Activated CD8-positive, alpha-beta T cell treated with anti-CD3 and anti-CD28 coated beads for 36 hours (primary cell): ENCODE measurements at regions of chr15 and their contacts with region 1.

Region 1: DNA sequence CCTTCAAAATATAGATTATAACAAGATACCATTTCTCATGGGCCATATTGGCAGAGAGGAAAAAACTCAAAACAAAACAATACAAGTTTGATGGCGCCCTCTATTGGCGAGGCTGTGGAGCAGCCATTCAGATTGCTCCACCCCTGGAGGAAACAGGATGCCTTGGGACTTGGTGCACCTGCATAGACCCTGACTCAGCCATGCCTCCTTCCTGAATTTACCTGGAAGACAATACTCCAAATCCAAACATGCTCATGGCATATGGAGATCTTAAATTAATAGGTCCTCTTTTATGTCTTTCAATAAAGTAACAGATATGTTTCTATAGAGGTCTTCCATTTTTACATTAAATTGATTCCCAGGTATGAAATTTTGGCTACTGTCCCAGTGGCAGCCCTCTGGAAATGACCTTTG is 90.0 kb downstream of the APBA2 start:
- DNase-seq: peak; percentile 73
- ATAC-seq: peak; percentile 82
- H3K4me3 Mint-ChIP-seq: no peak overlapping the region
- H3K27ac Mint-ChIP-seq: no peak overlapping the region
- H3K4me1 Mint-ChIP-seq: peaks cover 33% of the 10 kb centered on the region
- H3K27me3 Mint-ChIP-seq: no peaks in the 10 kb centered on the region
- CTCF ChIP-seq: peak; percentile 90

Region 2: DNA sequence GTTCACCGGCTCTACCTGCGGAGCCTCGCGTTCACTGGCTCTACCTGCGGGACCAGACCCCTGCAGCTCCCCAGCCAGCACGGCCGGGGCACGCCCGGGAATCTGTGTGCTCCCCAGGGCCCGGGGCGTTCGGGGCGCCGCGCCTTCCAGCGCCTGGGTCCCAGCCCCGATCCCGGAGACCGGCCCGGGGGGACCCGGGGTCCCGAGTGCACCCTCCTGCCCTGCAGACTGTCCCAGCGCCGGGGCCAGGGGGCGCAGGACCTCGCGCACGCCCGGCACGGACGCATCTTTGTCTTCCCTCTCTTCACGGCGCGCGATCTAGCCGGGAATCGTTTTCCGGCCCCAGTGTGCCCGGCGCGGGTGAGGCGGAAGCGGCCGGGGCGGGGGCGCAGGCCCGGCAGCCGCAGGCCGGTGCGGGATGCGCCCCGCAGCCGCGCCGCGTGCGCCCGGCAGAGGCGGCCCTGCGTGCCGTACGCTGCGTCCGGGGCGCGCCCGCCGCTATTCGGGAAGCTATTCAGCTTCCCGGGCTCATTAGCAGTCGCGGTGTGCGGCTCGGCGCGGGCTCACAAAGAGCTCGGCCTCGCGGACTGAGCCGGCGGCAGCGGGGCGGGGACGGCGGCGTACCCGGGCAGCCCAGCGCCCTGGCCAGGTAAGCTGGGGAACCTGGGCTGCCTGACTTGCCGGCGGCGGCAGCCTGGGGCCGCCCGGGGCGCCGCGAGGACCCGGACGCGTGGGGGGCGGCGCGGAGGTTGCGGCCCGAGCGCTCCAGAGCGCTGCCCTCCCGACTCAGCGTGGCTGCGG is 89.9 kb before region 1 on chr15 and contains the start of gene APBA2:
- CTCF ChIA-PET with region 1: interaction called, 16 read pairs
- POLR2A ChIA-PET with region 1: no interaction called
- intact Hi-C with region 1: loop called (anchors 5 kb)
- DNase-seq: peak; percentile 56
- ATAC-seq: peak; percentile 50
- H3K4me3 Mint-ChIP-seq: peak within 1 kb of the TSS; percentile 84
- H3K27ac Mint-ChIP-seq: peak within 1 kb of the TSS; percentile 79
- H3K4me1 Mint-ChIP-seq: peaks cover 39% of the 10 kb centered on the region
- H3K27me3 Mint-ChIP-seq: no peaks in the 10 kb centered on the region
- CTCF ChIP-seq: no peak
- total RNA-seq, gene APBA2: 30.8 to 32.0 TPM

Region 3: GRCh38 chr15:28921919-28922706 is 53.7 kb before region 1 on chr15:
- CTCF ChIA-PET with region 1: interaction called, 25 read pairs
- POLR2A ChIA-PET with region 1: no interaction called
- intact Hi-C with region 1: no loop called
- DNase-seq: peak; percentile 10
- ATAC-seq: no peak
- H3K4me3 Mint-ChIP-seq: no peak overlapping the region
- H3K27ac Mint-ChIP-seq: no peak overlapping the region
- H3K4me1 Mint-ChIP-seq: peaks cover 64% of the 10 kb centered on the region
- H3K27me3 Mint-ChIP-seq: no peaks in the 10 kb centered on the region
- CTCF ChIP-seq: peak; percentile 37

Region 4: GRCh38 chr15:28935326-28935725 is 40.4 kb before region 1 on chr15:
- CTCF ChIA-PET with region 1: interaction called, 38 read pairs
- POLR2A ChIA-PET with region 1: interaction called, 3 read pairs
- intact Hi-C with region 1: loop called (anchors 5 kb)
- DNase-seq: peak; percentile 85
- ATAC-seq: peak; percentile 64
- H3K4me3 Mint-ChIP-seq: no peak overlapping the region
- H3K27ac Mint-ChIP-seq: no peak overlapping the region
- H3K4me1 Mint-ChIP-seq: peaks cover 71% of the 10 kb centered on the region
- H3K27me3 Mint-ChIP-seq: no peaks in the 10 kb centered on the region
- CTCF ChIP-seq: peak; percentile 51

Region 5: DNA sequence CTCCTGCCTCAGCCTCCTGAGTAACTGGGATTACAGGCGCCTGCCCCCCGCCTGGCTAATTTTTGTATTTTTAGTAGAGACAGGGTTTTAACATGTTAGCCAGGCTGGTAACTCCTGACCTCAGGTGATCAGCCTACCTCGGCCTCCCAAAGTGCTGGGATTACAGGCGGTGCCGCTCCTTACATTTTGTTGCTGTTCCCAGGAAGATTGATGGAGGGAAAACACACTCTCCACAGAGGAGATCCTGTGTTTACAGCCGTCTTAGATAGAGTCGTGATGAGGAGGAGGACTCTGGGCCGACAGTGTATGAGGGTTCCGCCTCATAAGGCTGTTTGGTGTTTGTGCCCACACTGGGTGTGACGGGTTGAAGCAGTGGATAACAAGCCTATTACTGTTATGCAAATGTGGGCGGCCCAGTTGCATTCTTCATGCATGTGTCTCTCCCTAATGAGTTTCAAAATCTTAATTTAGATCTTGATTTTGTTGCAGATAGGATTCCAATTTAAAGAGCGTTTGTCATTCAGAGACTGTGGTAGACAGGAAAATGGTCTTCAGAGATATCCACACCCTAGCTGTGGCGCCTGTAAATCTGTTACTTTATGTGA is 30.0 kb before region 1 on chr15:
- CTCF ChIA-PET with region 1: interaction called, 16 read pairs
- POLR2A ChIA-PET with region 1: no interaction called
- intact Hi-C with region 1: no loop called
- DNase-seq: no peak
- ATAC-seq: no peak
- H3K4me3 Mint-ChIP-seq: no peak overlapping the region
- H3K27ac Mint-ChIP-seq: no peak overlapping the region
- H3K4me1 Mint-ChIP-seq: peaks cover 77% of the 10 kb centered on the region
- H3K27me3 Mint-ChIP-seq: no peaks in the 10 kb centered on the region
- CTCF ChIP-seq: no peak

Region 6: GRCh38 chr15:28955160-28956008 is 20.4 kb before region 1 on chr15:
- CTCF ChIA-PET with region 1: interaction called, 14 read pairs
- POLR2A ChIA-PET with region 1: interaction called, 3 read pairs
- intact Hi-C with region 1: no loop called
- DNase-seq: peak; percentile 69
- ATAC-seq: peak; percentile 83
- H3K4me3 Mint-ChIP-seq: peak overlapping the region; percentile 9
- H3K27ac Mint-ChIP-seq: peak overlapping the region; percentile 55
- H3K4me1 Mint-ChIP-seq: peaks cover 54% of the 10 kb centered on the region
- H3K27me3 Mint-ChIP-seq: no peaks in the 10 kb centered on the region
- CTCF ChIP-seq: no peak

Region 7: DNA sequence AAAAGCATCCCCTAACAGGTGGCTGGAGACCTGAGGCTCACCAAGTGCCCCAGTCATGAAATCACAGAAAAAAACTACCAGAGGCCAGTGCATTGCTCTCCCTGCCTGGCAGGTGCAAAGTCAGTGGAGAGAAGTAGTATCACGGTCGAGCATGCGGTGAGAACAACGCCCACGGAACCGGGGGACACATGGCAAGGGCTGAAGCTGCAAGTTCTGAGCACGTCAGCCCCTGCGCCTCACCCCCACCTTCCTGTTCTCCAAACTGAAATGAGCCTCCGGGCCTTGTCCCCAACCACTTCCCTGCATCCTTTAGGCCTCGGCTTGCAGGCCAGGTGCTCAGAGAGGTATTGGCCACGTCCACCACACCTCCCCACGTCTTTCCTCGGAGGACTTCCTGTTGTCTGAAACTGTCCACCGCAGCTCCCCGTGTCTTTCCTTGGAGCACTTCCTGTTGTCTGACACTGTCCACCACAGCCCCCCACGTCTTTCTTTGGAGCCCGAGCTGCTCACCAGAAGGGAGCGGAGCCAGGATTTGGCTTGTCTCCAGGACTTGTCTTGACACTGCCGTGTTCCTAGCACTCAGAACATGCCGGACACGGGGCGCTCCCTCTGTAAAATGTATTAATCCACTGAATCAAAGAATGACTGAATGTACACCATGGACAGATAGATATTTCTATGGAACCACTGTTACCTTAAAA is 249.9 kb after region 1 on chr15:
- CTCF ChIA-PET with region 1: no interaction called
- POLR2A ChIA-PET with region 1: no interaction called
- intact Hi-C with region 1: no loop called
- DNase-seq: peak; percentile 4
- ATAC-seq: no peak
- H3K4me3 Mint-ChIP-seq: no peak overlapping the region
- H3K27ac Mint-ChIP-seq: no peak overlapping the region
- H3K4me1 Mint-ChIP-seq: no peaks in the 10 kb centered on the region
- H3K27me3 Mint-ChIP-seq: peaks cover 27% of the 10 kb centered on the region
- CTCF ChIP-seq: no peak